KBM-7 (cell line): ENCODE measurements at regions of chr14 and their contacts with region 1.

Region 1: DNA sequence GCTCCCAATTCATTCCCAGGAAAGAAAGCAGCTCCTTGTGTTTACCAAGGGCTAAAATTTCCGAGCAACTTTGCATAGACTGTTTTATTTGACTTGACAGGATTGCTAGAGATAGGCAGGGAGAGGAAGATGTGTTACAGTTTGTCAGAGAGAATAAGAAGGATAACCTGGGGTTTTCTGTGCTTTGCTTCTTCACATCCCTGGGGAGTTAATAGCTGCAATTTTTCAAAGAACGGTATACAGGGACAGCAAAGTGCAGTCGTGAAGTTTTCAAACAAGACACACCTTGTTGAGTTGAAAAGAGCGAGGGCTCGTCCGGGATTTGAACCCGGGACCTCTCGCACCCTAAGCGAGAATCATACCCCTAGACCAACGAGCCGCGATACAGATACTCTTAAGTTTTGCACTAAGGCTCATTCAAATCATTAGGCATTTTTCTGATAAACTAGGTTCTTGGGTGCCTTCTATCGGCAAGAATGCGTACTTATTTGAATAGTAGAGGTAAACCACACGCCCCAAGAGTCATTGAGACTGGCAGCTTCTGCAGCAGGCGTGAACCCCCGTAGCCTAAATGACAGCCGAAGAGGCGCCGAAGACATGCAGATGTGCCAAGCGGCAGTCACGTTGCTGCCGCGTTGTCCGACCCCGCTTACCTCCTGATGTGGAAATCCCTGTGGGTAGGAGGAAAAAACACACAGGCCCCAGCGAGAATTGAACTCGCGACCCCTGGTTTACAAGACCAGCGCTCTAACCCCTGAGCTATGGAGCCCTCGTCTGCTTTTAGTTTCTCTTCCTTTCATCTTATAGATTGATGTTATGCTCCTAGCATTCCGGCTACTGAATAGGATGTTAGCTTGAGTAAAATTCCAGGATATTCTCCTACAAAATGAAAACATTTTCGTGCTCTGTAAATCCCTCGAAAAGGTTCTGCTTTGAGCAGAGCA is 22.2 kb upstream of the RNASE12 start:
- DNase-seq: peak; percentile 98

Region 2: DNA sequence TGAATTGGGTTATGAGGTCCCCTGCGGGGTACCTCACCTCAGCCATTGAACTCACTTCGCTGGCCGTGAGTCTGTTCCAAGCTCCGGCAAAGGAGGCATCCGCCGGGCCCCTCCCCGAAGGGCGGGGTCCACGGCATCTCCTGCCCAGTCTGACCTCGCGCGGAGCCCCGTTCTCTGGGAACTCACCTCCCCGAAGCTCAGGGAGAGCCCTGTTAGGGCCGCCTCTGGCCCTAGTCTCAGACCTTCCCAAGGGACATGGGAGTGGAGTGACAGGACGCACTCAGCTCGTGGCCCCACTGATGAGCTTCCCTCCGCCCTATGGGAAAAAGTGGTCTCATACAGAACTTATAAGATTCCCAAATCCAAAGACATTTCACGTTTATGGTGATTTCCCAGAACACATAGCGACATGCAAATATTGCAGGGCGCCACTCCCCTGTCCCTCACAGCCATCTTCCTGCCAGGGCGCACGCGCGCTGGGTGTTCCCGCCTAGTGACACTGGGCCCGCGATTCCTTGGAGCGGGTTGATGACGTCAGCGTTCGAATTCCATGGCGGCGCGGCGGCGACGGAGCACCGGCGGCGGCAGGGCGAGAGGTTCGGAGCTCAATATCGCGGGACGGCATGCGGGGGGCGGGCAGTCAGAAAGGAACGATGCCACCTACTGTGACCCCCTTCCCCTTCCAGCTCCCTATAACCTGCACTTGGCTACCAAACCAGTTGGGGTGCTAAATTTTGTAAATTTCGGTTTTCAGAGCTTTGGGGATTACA is 270.1 kb before region 1 on chr14 and contains the start of gene PARP2:
- in situ Hi-C with region 1: loop called (anchors 25 kb)
- DNase-seq: peak; percentile 100

Region 3: DNA sequence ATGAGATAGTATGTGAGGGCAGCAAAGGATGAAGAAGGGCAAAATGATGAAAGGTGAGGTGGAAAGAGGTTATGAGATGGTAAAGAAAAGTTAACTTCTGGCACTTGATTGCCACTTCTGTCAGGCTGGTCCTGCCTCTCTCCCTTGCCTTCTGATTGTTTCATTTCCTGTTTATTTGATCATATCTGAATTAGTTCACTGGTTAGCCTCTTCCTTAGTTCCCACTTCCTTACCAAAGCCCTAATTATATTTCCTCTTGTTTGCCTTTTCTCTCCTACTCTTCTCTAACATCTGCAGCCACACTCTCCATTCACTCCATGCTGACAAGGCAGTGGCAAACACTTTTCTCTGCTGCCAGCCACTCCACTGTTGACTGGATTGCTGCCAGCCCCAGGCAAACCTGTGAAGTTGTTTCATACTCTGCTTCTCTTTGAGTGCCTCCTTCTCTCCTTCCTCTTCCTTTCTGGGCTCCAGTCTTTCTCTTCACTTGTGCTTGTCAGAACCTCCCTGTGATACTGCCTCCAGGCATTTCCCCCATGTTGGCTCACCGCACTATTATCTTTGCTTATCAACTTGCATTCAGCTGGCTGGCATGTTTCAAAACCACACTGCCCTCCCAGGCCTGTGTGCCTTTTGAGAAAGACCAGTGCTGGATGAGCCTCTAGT is 136.0 kb before region 1 on chr14:
- in situ Hi-C with region 1: no loop called
- DNase-seq: peak; percentile 93